ENCODE measurements at regions of chr7 and their contacts with region 1.

Region 1: DNA sequence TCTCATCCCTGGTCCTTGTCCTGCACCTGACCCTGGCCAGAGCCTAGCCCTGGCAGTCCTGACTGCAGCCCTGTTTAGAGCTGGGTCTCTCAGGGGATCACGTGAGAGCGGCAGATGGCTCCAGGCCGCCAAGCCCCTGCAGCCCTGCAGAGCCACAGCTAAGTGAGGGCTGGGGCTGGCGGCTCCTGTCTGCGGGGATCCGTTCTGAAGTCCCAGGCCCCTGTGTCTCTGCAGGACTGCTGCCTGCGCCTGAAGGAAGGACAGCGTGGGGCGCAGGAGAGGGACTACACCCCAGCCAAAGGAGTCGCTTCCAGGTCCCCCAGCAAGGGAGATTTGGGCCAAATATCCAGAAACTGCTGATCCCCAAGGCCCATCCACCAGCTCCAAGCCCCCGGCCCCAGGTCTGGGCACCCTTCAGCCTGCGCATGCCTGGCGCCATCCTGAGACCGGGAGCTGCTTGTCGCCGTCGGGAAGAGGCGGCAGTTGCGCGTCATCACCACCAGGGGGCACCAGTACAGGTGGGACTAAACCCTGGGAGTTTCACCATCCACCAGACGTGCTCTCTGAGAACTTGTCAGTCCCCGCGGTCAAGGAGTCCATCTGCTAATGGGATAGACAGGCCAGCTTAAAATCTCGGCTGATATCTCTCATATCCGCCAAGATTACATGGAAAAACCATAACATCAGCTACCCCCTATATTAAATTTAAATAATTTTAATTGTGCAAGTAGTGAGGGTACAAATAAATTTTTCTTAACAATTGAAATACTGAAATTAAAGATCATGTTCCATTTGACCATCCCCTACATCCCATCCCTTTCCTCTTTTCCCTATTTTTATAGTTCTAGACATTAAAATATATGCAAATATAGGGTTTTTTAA is 25.1 kb upstream of the GHRHR start:
- DNase-seq: no peak
- H3K4me3 ChIP-seq: no peak overlapping the region
- CTCF ChIP-seq: peak; percentile 97

Region 2: GRCh38 chr7:30851651-30852307 is 86.9 kb before region 1 on chr7:
- CTCF ChIA-PET with region 1: interaction called, 14 read pairs
- POLR2A ChIA-PET with region 1: no interaction called
- DNase-seq: no peak
- H3K4me3 ChIP-seq: no peak overlapping the region
- CTCF ChIP-seq: no peak

Region 3: GRCh38 chr7:30920584-30921539 is 17.8 kb before region 1 on chr7:
- CTCF ChIA-PET with region 1: interaction called, 77 read pairs
- POLR2A ChIA-PET with region 1: no interaction called
- DNase-seq: no peak
- H3K4me3 ChIP-seq: no peak overlapping the region
- CTCF ChIP-seq: no peak

Region 4: DNA sequence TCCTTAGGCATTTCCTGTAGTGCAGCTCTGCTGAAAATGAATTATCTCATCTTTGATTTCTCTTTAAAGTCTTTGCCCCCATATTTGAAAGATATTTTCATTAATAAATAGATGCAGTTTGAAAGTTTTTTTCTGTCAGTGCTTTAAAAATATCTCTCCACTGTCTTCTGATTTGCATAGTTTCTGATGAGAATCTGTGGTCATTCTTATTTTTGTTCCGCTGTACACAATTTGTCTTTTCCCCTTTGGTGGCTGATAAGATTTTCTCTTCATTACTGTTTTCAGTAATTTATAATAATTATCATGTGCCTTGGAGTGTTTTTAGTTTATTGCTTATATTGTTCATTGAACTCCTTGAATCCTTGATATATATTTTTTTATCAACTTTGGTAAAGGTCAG is 18.0 kb after region 1 on chr7:
- CTCF ChIA-PET with region 1: interaction called, 24 read pairs
- POLR2A ChIA-PET with region 1: no interaction called
- DNase-seq: no peak
- H3K4me3 ChIP-seq: no peak overlapping the region
- CTCF ChIP-seq: no peak

Region 5: DNA sequence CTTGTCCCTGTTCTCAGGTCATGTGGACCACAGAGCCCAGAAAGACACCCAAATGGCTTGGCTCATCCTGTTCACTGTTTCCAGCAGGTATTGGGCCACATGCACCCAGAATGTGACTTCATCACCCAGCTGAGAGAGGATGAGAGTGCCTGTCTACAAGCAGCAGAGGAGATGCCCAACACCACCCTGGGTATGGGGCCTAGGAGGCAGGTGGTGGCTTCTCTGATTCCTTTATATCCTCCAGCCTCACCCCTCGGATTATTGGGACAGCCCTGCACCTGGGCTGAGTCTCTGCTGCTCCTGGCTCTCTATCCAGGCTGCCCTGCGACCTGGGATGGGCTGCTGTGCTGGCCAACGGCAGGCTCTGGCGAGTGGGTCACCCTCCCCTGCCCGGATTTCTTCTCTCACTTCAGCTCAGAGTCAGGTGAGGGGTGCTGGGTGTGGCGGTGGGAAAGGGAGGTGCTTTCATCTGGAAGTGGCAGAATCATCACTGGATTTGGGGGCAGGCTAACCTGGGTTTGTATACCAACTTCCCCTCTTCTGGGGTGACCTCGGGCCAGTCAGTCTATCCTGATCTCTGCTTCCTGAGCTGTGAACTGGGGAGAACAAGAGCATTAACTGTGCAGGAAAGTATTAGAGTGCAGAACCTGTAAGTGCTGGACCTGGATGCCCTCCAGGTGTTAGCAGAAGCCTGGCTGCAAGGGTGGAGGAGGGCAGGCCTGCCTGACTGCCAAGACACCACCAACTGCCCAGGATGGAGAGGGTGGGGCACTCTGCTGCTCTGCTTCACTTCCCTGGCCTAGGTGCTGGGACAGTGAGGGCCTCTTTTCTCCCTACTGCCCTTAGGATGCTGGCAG is 30.3 kb after region 1 on chr7:
- CTCF ChIA-PET with region 1: interaction called, 24 read pairs
- POLR2A ChIA-PET with region 1: no interaction called
- DNase-seq: no peak
- H3K4me3 ChIP-seq: no peak overlapping the region
- CTCF ChIP-seq: no peak

Region 6: DNA sequence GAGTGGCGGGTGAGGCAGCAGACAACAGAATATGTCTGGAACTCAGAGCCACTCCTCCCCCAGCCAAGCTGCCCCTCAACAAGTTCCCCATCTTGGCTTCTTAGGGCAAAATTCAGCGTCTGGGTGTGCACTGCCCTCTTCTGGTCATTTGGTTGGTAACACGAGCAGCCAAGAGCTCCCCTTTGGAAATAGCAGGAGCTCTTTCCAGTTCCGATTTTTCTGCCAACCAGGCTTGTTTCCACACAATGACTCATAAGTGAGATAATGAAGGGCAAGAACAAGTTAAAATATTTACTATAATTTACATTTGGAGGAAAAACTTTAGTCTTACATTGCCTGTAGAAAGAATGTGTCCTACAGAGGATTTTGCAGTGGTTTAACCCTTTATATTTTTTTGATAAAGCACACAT is 184.0 kb after region 1 on chr7:
- CTCF ChIA-PET with region 1: interaction called, 49 read pairs
- POLR2A ChIA-PET with region 1: no interaction called
- DNase-seq: peak; percentile 60
- H3K4me3 ChIP-seq: no peak overlapping the region
- CTCF ChIP-seq: peak; percentile 77

Region 7: GRCh38 chr7:31583942-31584341 is 645.3 kb after region 1 on chr7:
- CTCF ChIA-PET with region 1: no interaction called
- POLR2A ChIA-PET with region 1: no interaction called
- DNase-seq: no peak
- H3K4me3 ChIP-seq: no peak overlapping the region
- CTCF ChIP-seq: no peak

Measured in AG04449 (cell line).